Left cardiac atrium (tissue), 4 donors: ENCODE measurements at regions of chr14 and their contacts with region 1.

Region 1: DNA sequence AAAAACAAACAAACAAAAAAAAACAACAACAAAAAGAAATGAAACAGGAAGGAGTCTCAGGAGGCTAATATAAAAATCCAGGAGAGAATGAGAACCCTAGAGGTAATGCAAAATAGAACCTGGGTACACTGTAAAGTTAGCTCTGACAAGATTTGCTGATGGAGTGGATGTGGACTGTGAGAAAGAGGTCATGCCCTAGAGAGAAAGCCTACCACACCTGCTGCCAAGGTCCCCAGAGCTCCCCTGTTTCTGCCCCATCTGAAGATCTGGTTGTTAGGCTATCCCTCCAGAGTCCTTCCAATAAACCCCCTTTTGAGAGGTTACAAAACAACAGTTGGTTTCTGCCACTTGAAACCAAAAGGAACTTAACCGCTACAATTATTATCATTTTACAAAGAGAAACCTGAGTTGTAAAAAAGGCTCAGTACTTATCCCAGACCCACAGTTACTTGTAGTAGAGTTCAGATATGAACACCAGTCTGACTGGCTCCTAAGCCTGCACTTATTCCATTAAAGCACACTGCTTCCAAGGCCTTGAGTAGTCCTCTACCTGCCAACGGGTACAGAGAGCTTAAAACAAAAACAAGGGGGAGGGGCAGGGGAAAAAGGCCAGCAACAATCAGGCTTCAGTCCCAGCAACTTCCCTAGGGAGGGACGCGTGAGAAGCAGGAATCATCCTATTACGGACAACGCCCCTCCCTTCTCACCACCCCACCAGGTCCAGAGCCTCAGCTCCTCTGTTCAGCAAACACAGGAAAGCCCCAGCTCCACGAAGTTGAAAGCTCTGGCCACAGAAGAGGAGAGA is 27.7 kb downstream of the PPP1R13B start:
- DNase-seq: peak; percentile 72
- ATAC-seq: peak; percentile 77 to 87

Region 2: DNA sequence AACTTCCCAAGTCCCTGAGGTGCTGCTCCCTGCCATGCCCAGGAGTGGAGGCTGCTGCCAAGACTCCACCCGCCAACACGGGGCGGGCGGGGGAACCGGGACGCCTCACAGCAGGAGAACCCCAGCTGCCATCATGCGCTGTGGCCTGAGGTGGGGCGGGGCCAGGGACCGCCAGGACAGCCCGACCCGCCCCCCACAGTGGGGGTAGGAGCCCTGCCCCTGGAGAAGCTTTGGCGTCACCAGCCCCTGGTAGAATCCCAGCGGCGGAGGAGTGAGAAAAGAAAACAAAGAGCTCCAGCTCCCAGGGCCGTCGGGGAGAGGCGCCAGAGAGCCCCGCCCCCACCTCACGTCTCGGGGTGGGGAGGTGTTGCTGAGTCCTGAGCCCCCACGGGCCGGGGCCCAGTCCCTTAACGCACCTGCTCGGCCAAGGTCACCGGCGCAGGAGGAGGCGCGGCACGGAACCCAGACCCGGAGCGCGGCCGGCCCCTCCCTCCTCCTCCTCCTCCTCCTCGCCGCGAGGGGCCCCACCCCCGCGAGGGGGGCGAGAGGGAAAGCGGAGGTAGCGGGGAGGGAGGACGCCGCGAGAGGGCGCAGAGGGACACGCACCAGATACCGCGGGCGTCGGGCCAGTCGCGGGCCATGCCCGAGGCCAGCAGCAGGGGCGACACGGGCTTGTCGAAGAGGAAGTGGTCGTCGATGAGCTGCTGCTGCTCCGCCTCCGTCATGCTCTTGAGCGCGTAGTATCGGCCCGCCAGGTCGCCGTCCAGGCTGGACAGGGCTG is 298.9 kb before region 1 on chr14:
- intact Hi-C with region 1: no loop called
- DNase-seq: peak; percentile 84
- ATAC-seq: peak; percentile 44 to 54

Region 3: DNA sequence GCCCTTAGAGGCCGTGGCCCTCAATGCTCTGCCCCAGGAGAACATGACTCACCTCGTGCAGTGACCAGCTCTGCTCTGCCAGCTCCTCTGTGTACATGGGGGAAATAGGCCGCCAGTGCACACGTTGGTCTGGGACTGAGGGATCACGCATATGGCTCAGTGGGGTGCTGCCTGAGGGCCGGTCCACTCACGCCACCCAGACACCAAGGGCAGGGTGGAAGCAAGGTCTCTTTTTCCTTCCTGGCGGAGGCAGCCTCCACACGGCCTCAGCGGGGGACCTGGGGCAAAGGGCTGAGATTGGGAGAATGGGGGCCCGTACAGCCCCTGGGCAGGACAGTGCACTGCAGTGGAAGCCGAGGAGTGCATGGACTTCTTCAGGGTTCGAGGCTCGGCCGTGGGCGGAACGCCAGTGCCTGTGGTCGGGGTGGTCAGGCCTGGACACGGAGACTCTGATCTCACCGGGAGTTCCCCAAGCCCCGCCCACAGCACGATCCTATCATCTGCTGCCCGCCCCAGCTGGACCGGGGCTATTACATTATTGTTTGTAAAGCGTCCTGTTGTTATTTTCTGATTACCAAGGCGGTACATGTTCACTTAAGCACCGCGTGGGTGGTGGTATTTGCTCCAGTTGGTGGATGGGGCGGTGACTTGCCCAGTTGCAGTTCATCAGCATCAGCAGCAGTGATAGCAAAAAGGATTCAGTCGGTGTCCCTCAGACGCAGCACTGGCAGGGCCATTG is 69.8 kb after region 1 on chr14:
- intact Hi-C with region 1: loop called in 1 of 2 experiments (anchors 10 kb)
- DNase-seq: no peak
- ATAC-seq: peak in 1 of 2 donors; percentile 8

Region 4: GRCh38 chr14:104639889-104640548 is 820.3 kb after region 1 on chr14:
- intact Hi-C with region 1: no loop called
- DNase-seq: peak; percentile 63
- ATAC-seq: peak; percentile 86 to 91